Caco-2 (cell line): ENCODE measurements at regions of chr3 and their contacts with region 1.

Region 1: GRCh38 chr3:14587740-14588360 is 47.7 kb upstream of the GRIP2 start:
- DNase-seq: no peak
- H3K4me3 ChIP-seq: no peak overlapping the region
- H3K4me3 Mint-ChIP-seq: no peak overlapping the region
- H3K27ac Mint-ChIP-seq: no peak overlapping the region
- H3K4me1 ChIP-seq: peaks cover 20% of the 10 kb centered on the region
- H3K4me1 Mint-ChIP-seq: peaks cover 8% of the 10 kb centered on the region
- H3K27me3 ChIP-seq: no peaks in the 10 kb centered on the region
- H3K27me3 Mint-ChIP-seq: no peaks in the 10 kb centered on the region
- CTCF ChIP-seq: no peak

Region 2: DNA sequence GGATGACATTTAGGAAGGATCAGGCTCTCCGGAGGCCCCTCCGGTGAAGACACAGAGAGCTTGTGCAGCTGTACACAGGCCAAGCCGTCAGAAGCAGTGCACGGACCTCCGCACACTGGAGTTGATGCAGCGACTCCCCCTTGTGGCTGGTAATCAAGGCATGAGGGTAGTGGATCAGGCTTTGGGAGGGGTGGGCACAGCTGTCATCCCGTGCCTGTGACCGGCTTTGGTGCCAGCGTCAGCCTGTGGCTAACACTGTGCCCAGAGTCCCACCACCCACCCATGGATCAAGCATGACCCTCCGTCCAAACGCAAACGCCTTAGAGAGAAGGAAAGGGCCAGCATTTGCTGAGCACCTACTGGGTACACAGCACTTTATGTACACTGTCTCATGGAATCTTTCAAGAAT is 39.5 kb before region 1 on chr3:
- CTCF ChIA-PET with region 1: interaction called, 4 read pairs
- POLR2A ChIA-PET with region 1: no interaction called
- intact Hi-C with region 1: loop called (anchors 5 kb)
- DNase-seq: peak; percentile 59 to 61
- H3K4me3 ChIP-seq: no peak overlapping the region
- H3K4me3 Mint-ChIP-seq: no peak overlapping the region
- H3K27ac Mint-ChIP-seq: no peak overlapping the region
- H3K4me1 ChIP-seq: peaks cover 9% of the 10 kb centered on the region
- H3K4me1 Mint-ChIP-seq: peaks cover 12% of the 10 kb centered on the region
- H3K27me3 ChIP-seq: no peaks in the 10 kb centered on the region
- H3K27me3 Mint-ChIP-seq: no peaks in the 10 kb centered on the region
- CTCF ChIP-seq: peak; percentile 61 to 66

Region 3: DNA sequence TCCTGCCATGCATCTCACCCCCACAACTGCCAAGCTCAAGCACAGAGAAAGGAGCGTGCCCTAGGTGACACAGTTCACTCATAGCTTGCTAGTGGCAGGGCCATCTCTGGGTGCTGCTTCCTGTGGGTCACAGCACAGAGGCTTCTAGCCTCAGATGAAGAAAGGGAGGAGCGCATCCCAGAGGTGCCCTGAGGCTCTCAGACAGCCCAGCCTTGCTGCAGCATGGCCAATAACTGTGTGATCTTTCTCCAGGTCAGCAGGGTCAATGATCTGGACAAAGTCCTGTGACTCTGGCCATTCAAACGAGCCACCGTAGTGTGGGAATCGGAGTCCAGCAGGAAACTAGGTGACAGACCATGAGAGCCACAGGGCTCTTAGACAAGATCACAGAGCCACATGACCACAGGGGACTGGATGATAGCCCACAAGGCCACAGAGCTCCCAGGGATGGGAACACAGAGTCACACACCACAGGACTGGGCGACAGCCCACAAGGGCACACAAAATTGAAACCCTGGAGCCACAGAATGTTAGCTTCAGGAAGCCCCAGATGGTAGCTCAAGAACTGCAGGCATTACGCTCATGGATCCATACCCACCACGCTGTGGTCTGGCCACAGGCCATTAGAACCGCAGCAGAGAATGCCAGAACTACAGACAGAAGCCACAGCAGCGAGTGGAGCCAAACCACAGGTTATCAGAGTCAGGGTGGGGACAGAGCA is 21.8 kb before region 1 on chr3:
- CTCF ChIA-PET with region 1: no interaction called
- POLR2A ChIA-PET with region 1: no interaction called
- intact Hi-C with region 1: no loop called
- DNase-seq: peak in 1 of 2 experiments; percentile 47
- H3K4me3 ChIP-seq: no peak overlapping the region
- H3K4me3 Mint-ChIP-seq: no peak overlapping the region
- H3K27ac Mint-ChIP-seq: no peak overlapping the region
- H3K4me1 ChIP-seq: no peaks in the 10 kb centered on the region
- H3K4me1 Mint-ChIP-seq: no peaks in the 10 kb centered on the region
- H3K27me3 ChIP-seq: no peaks in the 10 kb centered on the region
- H3K27me3 Mint-ChIP-seq: peaks cover 4% of the 10 kb centered on the region
- CTCF ChIP-seq: no peak